ENCODE measurements at regions of chr11 and their contacts with region 1.

Region 1: GRCh38 chr11:86608251-86608799 is 64.1 kb downstream of the ME3 start:
- DNase-seq: peak; percentile 73
- ATAC-seq: peak; percentile 92
- H3K4me3 ChIP-seq: peak overlapping the region; percentile 4
- H3K27ac ChIP-seq: peak overlapping the region; percentile 5
- H3K4me1 ChIP-seq: peaks cover 18% of the 10 kb centered on the region
- H3K27me3 ChIP-seq: no peaks in the 10 kb centered on the region
- CTCF ChIP-seq: peak; percentile 95

Region 2: GRCh38 chr11:86456052-86456939 is 152.0 kb before region 1 on chr11:
- intact Hi-C with region 1: loop called (anchors 10 kb)
- DNase-seq: peak; percentile 79
- ATAC-seq: peak; percentile 85
- H3K4me3 ChIP-seq: no peak overlapping the region
- H3K27ac ChIP-seq: no peak overlapping the region
- H3K4me1 ChIP-seq: peaks cover 31% of the 10 kb centered on the region
- H3K27me3 ChIP-seq: no peaks in the 10 kb centered on the region
- CTCF ChIP-seq: peak; percentile 95

Region 3: GRCh38 chr11:86802601-86803051 is 194.3 kb after region 1 on chr11:
- intact Hi-C with region 1: loop called (anchors 10 kb)
- DNase-seq: no peak
- ATAC-seq: peak; percentile 39
- H3K4me3 ChIP-seq: peak overlapping the region; percentile 62
- H3K27ac ChIP-seq: peak overlapping the region; percentile 73
- H3K4me1 ChIP-seq: peaks cover 11% of the 10 kb centered on the region
- H3K27me3 ChIP-seq: peaks cover 4% of the 10 kb centered on the region
- CTCF ChIP-seq: peak; percentile 56